Mammary epithelial cell (primary cell): ENCODE measurements at regions of chr17 and their contacts with region 1.

Region 1: GRCh38 chr17:40854159-40854814 is 12.7 kb downstream of the KRT12 start:
- DNase-seq: peak; percentile 84
- H3K4me3 ChIP-seq: no peak overlapping the region
- H3K27ac ChIP-seq: no peak overlapping the region
- H3K4me1 ChIP-seq: peaks cover 20% of the 10 kb centered on the region
- H3K27me3 ChIP-seq: no peaks in the 10 kb centered on the region
- CTCF ChIP-seq: no peak

Region 2: DNA sequence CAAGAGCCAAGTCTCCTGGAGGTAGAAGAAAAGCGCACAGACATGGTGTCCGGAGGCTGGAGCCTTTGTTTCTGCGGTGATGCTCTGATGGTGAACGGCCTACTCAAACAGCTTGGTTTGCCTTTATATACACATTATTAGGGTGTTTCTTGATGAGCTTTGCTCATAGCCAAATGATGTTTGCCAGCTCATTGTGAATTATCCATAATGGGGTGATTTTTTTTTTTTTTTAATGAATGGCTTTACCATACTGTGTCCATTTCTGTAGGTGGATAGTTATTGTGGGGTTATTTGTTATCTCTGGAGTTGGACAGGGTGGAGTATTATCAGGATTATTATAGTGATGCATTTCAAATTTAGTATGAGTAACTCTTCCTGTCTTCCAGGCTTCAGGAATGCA is 71.8 kb before region 1 on chr17 and contains the start of gene KRT27:
- CTCF ChIA-PET with region 1: no interaction called
- dilution Hi-C with region 1: loop called (anchors 5 kb)
- in situ Hi-C with region 1: no loop called
- intact Hi-C with region 1: no loop called
- DNase-seq: no peak
- H3K4me3 ChIP-seq: no peak within 1 kb of the TSS
- H3K27ac ChIP-seq: no peak within 1 kb of the TSS
- H3K4me1 ChIP-seq: peaks cover 3% of the 10 kb centered on the region
- H3K27me3 ChIP-seq: no peaks in the 10 kb centered on the region
- CTCF ChIP-seq: no peak
- total RNA-seq, gene KRT27: not detected

Region 3: GRCh38 chr17:40884708-40885512 is 30.6 kb after region 1 on chr17 and contains the start of gene KRT20:
- CTCF ChIA-PET with region 1: no interaction called
- dilution Hi-C with region 1: no loop called
- in situ Hi-C with region 1: no loop called
- intact Hi-C with region 1: no loop called
- DNase-seq: no peak
- H3K4me3 ChIP-seq: no peak within 1 kb of the TSS
- H3K27ac ChIP-seq: no peak within 1 kb of the TSS
- H3K4me1 ChIP-seq: no peaks in the 10 kb centered on the region
- H3K27me3 ChIP-seq: peaks cover 3% of the 10 kb centered on the region
- CTCF ChIP-seq: peak; percentile 14 to 16
- total RNA-seq, gene KRT20: not detected

Region 4: GRCh38 chr17:41329281-41329948 is 475.1 kb after region 1 on chr17:
- CTCF ChIA-PET with region 1: no interaction called
- dilution Hi-C with region 1: no loop called
- in situ Hi-C with region 1: no loop called
- intact Hi-C with region 1: loop called (anchors 1 kb)
- DNase-seq: peak; percentile 52
- H3K4me3 ChIP-seq: no peak overlapping the region
- H3K27ac ChIP-seq: no peak overlapping the region
- H3K4me1 ChIP-seq: peaks cover under 1% of the 10 kb centered on the region
- H3K27me3 ChIP-seq: no peaks in the 10 kb centered on the region
- CTCF ChIP-seq: peak; percentile 88 to 96

Region 5: GRCh38 chr17:41403798-41404671 is 549.7 kb after region 1 on chr17:
- CTCF ChIA-PET with region 1: no interaction called
- dilution Hi-C with region 1: no loop called
- in situ Hi-C with region 1: no loop called
- intact Hi-C with region 1: loop called (anchors 1 kb)
- DNase-seq: peak; percentile 100
- H3K4me3 ChIP-seq: no peak overlapping the region
- H3K27ac ChIP-seq: peak overlapping the region; percentile 94
- H3K4me1 ChIP-seq: peaks cover 32% of the 10 kb centered on the region
- H3K27me3 ChIP-seq: no peaks in the 10 kb centered on the region
- CTCF ChIP-seq: no peak

Region 6: DNA sequence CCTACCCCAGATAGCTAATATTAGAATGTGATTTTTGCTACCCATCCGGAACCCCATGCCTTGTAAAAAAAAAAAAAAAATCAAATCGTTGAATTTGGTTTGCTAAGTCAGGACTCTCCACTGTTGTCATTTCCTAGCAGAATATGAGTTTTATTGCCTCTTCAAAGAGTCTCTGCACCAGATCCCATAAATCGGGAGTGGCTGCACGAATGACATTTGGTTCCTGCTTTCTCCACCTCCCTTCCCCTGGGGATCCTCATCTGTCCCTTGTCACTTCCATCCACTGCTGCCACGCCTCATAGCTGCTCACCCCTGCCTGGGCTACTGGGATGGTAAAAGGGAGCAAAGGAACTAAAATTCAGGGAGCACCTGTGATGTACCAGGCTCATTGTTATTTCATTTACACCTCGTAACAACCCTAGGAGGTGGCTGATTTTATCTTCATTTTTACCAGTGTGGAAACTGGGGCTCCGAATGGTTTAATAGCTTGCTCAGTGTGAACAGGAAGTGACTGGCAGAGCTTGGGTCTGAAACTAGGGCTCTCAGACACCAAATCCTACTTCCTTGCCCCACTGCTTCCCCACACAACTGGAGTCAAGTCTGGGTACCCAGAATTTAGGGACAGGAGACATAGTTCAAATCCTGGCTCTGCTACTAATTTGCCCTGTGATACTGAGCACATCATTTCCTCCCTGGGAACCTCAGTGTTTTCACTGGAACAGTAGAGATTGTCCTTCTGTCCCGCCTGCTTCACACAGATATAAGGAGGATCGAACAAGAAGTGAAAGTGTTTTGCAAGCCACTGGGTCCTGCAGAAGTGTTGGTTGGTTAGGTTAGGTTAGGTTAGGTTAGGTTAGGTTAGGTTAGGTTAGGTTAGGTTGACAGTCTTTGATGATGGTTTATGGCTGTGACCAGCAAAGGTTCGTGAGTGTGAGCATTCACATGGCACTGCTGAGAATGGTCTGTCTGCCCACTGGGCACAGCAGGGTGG is 636.0 kb after region 1 on chr17:
- CTCF ChIA-PET with region 1: no interaction called
- dilution Hi-C with region 1: no loop called
- in situ Hi-C with region 1: no loop called
- intact Hi-C with region 1: no loop called
- DNase-seq: no peak
- H3K4me3 ChIP-seq: no peak overlapping the region
- H3K27ac ChIP-seq: no peak overlapping the region
- H3K4me1 ChIP-seq: peaks cover 11% of the 10 kb centered on the region
- H3K27me3 ChIP-seq: no peaks in the 10 kb centered on the region
- CTCF ChIP-seq: no peak